ENCODE measurements at regions of chr4 and their contacts with region 1.

Region 1: GRCh38 chr4:47836641-47837093 is 1.2 kb downstream of the CORIN start:
- DNase-seq: peak; percentile 77
- CTCF ChIP-seq: peak; percentile 75

Region 2: GRCh38 chr4:47686294-47686872 is 150.3 kb before region 1 on chr4:
- CTCF ChIA-PET with region 1: interaction called, 17 read pairs
- POLR2A ChIA-PET with region 1: no interaction called
- DNase-seq: peak; percentile 50
- CTCF ChIP-seq: peak; percentile 60

Region 3: DNA sequence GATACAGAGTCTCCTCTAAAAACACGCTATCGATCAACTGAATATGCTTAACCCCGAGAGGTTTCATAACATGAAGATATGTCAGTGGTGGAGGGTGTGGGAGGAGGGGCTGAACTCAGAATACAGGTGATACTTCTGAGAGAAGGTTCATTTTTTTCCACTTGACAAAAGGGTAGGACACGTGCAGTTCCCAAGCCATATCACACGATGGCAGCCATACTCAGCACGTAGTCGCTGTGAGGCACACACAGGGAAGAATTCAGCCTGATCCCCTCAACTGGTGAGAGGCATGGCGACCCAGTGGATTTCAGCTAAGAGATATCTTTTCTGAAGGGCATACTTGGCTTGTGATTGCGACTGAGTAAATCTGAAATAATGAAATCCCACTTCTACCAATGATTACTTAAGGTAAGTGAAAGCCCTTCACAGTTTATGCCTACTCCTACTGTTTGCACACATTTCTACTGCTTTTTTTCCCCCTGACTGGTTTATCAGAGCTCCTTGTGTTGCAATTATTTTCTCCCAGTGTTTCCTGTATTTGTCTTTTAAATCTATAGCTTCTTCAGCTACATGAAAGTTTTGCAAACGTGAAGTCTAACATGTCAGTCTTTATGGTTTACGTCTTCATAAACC is 131.9 kb before region 1 on chr4:
- CTCF ChIA-PET with region 1: interaction called, 19 read pairs
- POLR2A ChIA-PET with region 1: no interaction called
- DNase-seq: peak; percentile 15
- CTCF ChIP-seq: peak; percentile 41

Region 4: DNA sequence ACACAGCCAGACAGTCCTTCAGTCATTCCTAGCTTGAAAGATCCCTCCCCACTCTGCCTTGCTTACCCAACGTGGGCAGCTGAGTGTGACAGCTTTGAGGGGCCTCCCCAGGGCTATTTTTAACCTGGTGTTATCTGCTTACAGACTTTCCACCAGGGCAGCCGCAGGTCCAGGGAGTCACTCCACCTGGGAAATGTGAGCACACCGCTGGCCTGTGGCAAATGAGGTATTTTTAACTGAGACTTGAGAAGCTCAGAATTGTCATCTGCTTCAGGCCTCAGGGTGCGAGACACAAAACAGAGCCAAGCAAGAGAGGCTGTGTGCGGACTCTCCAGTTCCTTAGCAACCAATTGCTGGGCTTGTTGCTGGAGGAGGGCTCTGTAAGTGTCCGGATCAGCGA is 11.8 kb before region 1 on chr4:
- CTCF ChIA-PET with region 1: interaction called, 20 read pairs
- POLR2A ChIA-PET with region 1: no interaction called
- DNase-seq: peak; percentile 29
- CTCF ChIP-seq: no peak

Region 5: GRCh38 chr4:47852136-47852535 is 15.5 kb after region 1 on chr4:
- CTCF ChIA-PET with region 1: interaction called, 20 read pairs
- POLR2A ChIA-PET with region 1: no interaction called
- DNase-seq: no peak
- CTCF ChIP-seq: no peak

Measured in GM10248 (cell line).